ENCODE measurements at regions of chr6 and their contacts with region 1.

Region 1: GRCh38 chr6:27893059-27893835 is 18.9 kb downstream of the OR2B2 start:
- DNase-seq: peak; percentile 67
- ATAC-seq: peak; percentile 71
- H3K4me3 Mint-ChIP-seq: no peak overlapping the region
- H3K27ac Mint-ChIP-seq: no peak overlapping the region
- H3K4me1 Mint-ChIP-seq: peaks cover 32% of the 10 kb centered on the region
- H3K27me3 Mint-ChIP-seq: no peaks in the 10 kb centered on the region
- CTCF ChIP-seq: no peak

Region 2: DNA sequence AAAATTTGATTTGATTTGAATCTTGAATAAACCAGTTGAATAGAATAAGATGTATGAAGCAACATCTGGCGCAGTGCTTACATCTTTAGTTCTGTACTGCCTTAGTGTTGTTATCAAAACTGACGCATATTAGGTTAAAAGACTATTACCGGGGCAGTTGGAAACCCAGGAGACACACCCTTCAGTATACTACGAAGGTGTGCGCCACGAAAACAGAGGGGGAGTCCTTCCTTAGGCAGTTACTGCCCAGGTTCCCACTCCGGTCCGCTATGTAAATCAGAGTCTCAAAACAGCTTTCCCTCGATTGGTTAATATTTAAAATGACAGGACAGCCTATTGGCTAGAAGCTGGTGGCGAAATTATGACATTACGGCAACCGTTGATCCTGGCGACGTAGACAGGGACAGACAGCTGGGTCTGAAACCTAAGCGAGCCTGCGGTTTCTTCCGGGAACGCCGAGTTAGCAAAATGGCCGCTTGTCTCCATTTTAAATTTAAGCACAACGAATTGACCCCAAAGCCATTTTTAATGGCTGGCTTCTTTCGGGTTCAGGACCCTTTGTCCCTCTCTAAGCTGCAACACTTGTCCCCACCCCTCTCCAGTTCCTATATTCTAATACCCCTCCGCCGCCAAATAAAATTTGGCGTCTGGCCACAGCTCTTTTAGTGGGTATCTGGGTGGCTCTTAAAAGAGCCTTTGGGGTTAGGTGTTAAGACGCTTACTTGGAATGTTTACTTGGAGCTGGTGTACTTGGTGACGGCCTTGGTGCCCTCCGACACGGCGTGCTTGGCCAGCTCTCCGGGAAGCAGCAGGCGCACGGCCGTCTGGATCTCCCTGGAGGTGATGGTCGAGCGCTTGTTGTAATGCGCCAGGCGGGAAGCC is 1770.2 kb before region 1 on chr6:
- CTCF ChIA-PET with region 1: no interaction called
- POLR2A ChIA-PET with region 1: interaction called, 53 read pairs
- intact Hi-C with region 1: loop called (anchors 2 kb)
- DNase-seq: peak; percentile 68
- ATAC-seq: peak; percentile 60
- H3K4me3 Mint-ChIP-seq: peak overlapping the region; percentile 94
- H3K27ac Mint-ChIP-seq: peak overlapping the region; percentile 99
- H3K4me1 Mint-ChIP-seq: peaks cover 34% of the 10 kb centered on the region
- H3K27me3 Mint-ChIP-seq: no peaks in the 10 kb centered on the region
- CTCF ChIP-seq: no peak

Region 3: DNA sequence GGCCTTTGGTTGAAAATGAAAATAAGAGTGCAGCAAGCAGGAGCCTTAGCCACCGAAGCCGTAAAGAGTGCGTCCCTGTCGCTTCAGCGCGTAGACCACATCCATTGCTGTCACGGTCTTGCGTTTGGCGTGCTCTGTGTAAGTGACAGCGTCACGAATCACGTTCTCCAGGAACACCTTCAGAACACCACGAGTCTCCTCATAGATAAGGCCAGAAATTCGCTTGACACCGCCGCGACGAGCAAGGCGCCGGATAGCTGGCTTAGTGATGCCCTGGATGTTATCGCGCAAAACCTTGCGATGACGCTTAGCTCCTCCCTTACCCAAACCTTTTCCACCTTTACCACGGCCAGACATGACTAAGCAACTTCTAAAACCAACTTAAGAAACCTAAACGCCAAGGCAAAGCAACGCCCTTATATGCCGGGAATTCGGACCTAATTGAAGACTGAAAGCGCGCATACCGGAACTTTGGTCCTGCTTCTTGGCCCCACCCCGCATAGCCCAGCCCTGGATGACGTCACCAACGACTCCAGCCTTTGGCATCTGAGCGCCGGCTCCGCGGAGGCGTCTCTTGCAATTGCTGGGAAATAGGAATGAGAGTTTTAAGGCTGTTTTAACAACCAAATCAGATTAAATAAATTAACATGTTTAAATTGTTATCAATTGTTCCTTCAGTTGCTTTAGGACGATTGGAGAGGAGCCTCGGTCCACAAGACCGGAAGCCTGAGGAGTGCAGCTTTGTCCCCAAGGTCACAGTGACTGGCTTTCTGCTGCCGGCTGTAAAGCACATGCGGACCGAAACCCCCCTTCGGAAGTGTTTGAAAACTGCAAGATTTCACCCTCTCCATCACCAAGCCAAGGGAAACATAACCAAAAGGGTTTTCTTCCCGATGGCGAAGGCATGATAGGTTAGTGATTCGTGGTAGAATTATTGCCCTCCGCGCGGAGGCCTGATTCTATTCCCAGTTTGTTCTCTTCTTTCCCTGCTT is 1607.8 kb before region 1 on chr6:
- CTCF ChIA-PET with region 1: no interaction called
- POLR2A ChIA-PET with region 1: interaction called, 17 read pairs
- intact Hi-C with region 1: no loop called
- DNase-seq: peak; percentile 80
- ATAC-seq: peak; percentile 75
- H3K4me3 Mint-ChIP-seq: peak overlapping the region; percentile 86
- H3K27ac Mint-ChIP-seq: peak overlapping the region; percentile 96
- H3K4me1 Mint-ChIP-seq: peaks cover 29% of the 10 kb centered on the region
- H3K27me3 Mint-ChIP-seq: peaks cover 3% of the 10 kb centered on the region
- CTCF ChIP-seq: no peak

Region 4: DNA sequence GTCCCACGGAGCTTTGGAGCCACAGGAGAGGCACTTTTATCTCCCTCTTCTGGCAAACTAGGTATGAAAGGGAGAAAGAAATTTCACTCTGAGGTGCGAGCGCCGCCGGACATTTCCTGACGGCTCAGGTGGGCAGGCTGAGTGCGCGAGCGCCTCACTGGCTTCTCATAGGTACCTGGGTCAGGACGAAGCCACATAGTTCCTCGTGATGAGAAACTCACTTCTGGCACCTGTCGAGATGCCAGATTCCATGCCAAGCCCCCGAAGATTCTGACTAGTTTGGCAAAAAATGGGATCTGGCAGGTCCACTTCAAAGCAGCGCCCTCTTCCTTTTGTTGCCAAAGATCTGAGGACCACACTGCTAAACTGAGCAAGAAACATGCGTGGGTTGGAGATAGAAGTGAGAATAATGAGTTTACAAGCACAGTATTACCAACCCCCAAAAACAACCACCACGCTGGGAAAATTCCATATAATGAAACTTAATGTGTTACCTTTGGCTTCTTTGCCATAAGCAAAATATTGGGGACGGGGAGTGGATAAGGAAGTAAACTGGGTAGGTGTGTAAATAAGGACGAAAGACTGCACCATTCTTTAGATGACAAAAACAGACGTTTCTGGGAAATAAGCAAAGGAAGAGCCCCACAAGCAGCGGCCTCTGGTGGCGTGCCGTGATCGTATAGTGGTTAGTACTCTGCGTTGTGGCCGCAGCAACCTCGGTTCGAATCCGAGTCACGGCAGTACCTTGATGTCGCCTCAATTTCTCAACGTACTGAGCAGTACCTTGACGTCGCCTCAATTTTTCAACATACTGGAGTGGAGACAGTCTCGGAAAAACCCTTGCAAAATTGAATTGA is 735.6 kb before region 1 on chr6:
- CTCF ChIA-PET with region 1: interaction called, 3 read pairs
- POLR2A ChIA-PET with region 1: interaction called, 3 read pairs
- intact Hi-C with region 1: loop called (anchors 1 kb)
- DNase-seq: peak; percentile 60
- ATAC-seq: peak; percentile 80
- H3K4me3 Mint-ChIP-seq: peak overlapping the region; percentile 89
- H3K27ac Mint-ChIP-seq: peak overlapping the region; percentile 81
- H3K4me1 Mint-ChIP-seq: peaks cover 33% of the 10 kb centered on the region
- H3K27me3 Mint-ChIP-seq: no peaks in the 10 kb centered on the region
- CTCF ChIP-seq: no peak

Region 5: GRCh38 chr6:27687154-27688013 is 205.9 kb before region 1 on chr6:
- CTCF ChIA-PET with region 1: no interaction called
- POLR2A ChIA-PET with region 1: interaction called, 4 read pairs
- intact Hi-C with region 1: loop called (anchors 2 kb)
- DNase-seq: peak; percentile 63
- ATAC-seq: peak; percentile 73
- H3K4me3 Mint-ChIP-seq: peak overlapping the region; percentile 93
- H3K27ac Mint-ChIP-seq: peak overlapping the region; percentile 90
- H3K4me1 Mint-ChIP-seq: peaks cover 16% of the 10 kb centered on the region
- H3K27me3 Mint-ChIP-seq: peaks cover 4% of the 10 kb centered on the region
- CTCF ChIP-seq: no peak

Region 6: DNA sequence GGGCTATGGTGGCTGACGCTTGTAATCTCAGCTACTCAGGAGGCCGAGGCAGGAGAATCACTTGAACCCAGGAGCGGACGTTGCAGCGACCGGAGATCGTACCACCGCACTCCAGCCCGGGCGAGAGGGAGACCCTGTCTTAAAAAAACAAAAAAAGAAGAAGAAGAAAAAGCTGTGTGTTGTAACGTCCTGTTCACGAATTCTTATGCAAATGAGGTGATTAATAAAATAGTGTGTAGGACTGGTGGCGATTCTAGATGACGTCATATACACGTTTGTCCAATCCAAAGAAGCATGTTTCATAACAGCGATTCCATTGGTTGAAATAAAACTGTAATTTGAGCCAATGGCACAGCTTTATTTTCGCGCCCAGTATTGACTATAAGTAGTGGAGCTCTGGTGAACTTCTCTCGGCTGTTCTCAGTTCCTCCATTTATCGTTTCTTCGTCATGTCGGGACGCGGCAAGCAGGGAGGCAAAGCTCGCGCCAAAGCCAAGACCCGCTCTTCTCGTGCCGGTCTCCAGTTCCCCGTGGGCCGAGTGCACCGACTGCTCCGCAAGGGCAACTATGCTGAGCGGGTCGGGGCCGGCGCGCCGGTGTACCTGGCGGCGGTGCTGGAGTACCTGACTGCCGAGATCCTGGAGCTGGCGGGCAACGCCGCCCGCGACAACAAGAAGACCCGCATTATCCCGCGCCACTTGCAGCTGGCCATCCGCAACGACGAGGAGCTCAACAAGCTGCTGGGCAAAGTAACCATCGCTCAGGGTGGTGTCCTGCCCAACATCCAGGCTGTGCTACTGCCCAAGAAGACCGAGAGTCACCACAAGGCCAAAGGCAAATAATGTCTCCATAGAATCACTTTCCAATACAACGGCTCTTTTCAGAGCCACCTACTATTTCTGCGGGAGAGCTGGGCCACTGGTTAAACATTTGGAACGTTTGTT is 28.1 kb before region 1 on chr6:
- CTCF ChIA-PET with region 1: interaction called, 42 read pairs
- POLR2A ChIA-PET with region 1: interaction called, 626 read pairs
- intact Hi-C with region 1: loop called (anchors 1 kb)
- DNase-seq: peak; percentile 68
- ATAC-seq: peak; percentile 85
- H3K4me3 Mint-ChIP-seq: peak overlapping the region; percentile 98
- H3K27ac Mint-ChIP-seq: peak overlapping the region; percentile 99
- H3K4me1 Mint-ChIP-seq: peaks cover 48% of the 10 kb centered on the region
- H3K27me3 Mint-ChIP-seq: no peaks in the 10 kb centered on the region
- CTCF ChIP-seq: no peak

Region 7: DNA sequence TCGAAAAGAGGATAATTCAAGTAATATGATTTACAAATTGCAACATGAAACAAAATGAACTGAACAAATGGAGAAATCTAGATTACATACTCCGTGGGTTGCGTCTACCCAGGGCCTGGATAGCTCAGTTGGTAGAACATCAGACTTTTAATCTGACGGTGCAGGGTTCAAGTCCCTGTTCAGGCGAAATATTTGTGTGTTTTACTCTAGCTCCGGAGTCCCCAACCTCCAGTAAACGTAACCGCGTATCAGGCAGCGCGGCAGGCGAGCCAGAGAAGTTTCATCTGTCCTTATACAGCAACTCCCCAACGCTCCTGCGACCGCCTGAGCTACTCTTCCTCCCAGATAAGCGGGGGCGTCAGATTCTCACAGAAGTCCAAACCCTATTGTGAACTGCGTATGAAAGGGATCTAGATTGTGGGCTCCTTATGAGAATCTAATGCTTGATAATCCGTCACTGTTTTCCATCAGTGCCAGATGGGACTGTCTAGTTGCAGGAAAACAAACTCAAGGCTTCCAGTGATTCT is 854.4 kb after region 1 on chr6:
- CTCF ChIA-PET with region 1: no interaction called
- POLR2A ChIA-PET with region 1: no interaction called
- intact Hi-C with region 1: no loop called
- DNase-seq: no peak
- ATAC-seq: no peak
- H3K4me3 Mint-ChIP-seq: no peak overlapping the region
- H3K27ac Mint-ChIP-seq: no peak overlapping the region
- H3K4me1 Mint-ChIP-seq: no peaks in the 10 kb centered on the region
- H3K27me3 Mint-ChIP-seq: peaks cover 34% of the 10 kb centered on the region
- CTCF ChIP-seq: no peak

Region 8: DNA sequence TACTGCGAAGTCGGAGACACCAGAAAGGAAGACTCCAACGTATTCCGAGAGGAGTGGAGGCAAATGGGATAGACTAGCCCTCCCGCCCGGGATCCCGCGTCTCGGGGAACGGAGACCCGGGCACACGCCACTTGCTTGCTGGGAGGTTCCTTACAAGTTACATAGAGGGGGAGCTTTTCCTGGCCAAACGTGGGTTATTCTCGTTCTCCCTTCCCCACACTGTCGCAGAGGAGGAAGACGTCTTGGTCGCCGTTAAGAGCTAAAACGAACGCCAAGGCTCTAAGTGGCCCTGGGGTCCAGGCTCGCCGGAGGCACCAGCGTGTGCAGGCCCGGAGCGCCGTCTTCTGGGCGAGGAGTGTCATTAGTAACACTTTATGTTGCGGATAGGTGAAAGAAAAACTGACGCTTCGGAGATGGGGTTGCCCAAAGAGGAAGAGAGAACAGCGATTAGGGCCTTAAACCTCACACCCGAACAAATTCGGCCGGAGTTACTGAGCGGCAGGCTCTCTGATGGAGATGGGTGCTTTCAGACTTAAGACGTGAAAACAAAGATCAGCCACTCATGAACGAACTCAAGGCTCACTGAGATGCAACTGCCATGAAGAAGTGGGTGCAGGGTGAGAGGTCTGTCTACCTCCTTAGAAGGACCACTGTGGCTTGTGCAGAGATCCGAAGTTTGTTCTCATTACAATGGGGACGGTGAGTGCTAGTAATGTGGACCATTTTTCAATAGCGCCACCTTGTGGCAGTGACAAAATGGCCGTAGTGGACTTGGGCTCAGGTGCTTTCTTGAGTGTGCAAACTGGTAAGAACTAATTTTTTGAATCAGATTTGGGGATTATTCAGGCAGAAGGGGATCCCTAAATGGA is 1123.5 kb after region 1 on chr6:
- CTCF ChIA-PET with region 1: no interaction called
- POLR2A ChIA-PET with region 1: no interaction called
- intact Hi-C with region 1: loop called (anchors 10 kb)
- DNase-seq: peak; percentile 63
- ATAC-seq: peak; percentile 85
- H3K4me3 Mint-ChIP-seq: peak overlapping the region; percentile 80
- H3K27ac Mint-ChIP-seq: peak overlapping the region; percentile 41
- H3K4me1 Mint-ChIP-seq: peaks cover 17% of the 10 kb centered on the region
- H3K27me3 Mint-ChIP-seq: peaks cover 31% of the 10 kb centered on the region
- CTCF ChIP-seq: peak; percentile 92

Measured in activated B cell treated with CpG ODN at 0.5 μM for 24 hours (primary cell).